Left colon (tissue), 2 donors: ENCODE measurements at regions of chr7 and their contacts with region 1.

Region 1: GRCh38 chr7:15555381-15555859 is 6.4 kb downstream of the AGMO start:
- DNase-seq: no peak
- ATAC-seq: peak; percentile 46

Region 2: DNA sequence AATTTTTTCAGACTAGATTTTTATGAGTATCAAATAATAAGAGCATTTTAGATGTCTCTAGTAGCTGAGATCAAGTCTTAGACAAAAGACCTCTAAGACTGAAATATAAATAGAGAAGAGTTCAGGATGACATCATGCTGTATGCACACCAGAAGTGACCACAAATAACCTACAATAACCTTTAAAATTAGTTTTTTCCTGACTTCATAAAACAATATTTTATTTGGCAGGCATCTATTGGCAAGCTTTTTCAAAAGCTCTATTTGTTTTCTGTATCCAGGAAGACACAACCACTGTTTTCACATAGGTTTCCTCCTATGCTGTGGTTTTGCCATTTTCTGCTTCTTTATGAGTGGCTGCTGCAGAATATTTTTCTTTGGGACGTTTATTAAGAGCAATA is 506.8 kb after region 1 on chr7:
- intact Hi-C with region 1: loop called in 1 of 2 experiments (anchors 10 kb)
- DNase-seq: no peak
- ATAC-seq: no peak